ENCODE measurements at regions of chr17 and their contacts with region 1.

Region 1: DNA sequence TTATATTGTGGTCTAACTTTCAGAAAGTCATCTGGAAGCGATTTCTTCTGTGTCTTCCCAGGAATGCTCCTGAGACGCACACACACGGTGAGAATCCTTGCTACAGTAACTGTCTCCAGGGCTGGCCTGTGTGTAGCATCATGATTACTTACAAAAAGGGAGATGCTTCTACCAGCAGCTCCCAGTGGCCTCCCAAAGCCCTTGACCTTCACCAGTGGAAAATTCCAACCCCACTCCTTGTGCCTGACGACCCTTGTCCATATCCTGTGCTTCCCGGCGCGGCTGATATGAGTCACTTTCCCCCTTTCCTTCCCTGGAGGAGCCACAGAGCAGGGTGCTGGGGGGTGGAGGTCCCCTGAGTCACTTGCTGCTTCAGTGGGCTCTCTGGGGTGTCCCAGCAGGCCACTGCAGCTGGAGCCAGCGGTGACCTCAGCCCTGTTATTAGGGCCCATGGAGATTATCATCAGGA is 22.1 kb upstream of the NAT9 start:
- DNase-seq: no peak
- H3K4me3 ChIP-seq: no peak overlapping the region
- H3K27ac ChIP-seq: no peak overlapping the region
- H3K4me1 ChIP-seq: no peaks in the 10 kb centered on the region
- H3K27me3 ChIP-seq: no peaks in the 10 kb centered on the region
- CTCF ChIP-seq: no peak
- POLR2A ChIP-seq: no peak

Region 2: DNA sequence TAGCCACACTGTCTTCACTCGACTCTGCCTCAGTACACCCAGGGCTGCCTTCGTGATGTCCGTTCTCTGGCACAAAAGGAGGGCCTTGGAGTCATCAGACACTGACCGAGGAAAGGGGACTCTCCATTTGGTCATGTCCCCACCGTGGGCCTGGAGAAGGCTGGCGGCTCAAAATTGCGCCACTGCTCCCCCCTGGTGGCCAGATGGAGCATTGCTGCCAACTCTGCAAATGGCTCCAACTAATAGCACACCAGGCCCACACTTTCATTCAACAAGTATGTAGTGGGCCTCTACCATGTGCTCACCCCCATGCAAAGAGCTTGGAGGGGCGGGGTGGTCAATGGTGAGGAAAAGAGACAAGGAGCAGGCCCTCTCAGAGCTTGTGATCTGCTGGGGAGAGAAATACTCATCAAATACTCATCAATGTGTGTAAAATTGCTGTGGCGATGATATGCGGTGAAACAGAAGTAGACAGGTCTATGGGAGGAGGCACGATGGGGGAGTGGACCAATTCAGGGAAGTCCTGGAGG is 66.7 kb after region 1 on chr17:
- intact Hi-C with region 1: loop called (anchors 5 kb)
- DNase-seq: peak; percentile 85
- H3K4me3 ChIP-seq: no peak overlapping the region
- H3K27ac ChIP-seq: no peak overlapping the region
- H3K4me1 ChIP-seq: peaks cover 39% of the 10 kb centered on the region
- H3K27me3 ChIP-seq: no peaks in the 10 kb centered on the region
- CTCF ChIP-seq: peak; percentile 94 to 97 (median 97)
- POLR2A ChIP-seq: no peak

Region 3: DNA sequence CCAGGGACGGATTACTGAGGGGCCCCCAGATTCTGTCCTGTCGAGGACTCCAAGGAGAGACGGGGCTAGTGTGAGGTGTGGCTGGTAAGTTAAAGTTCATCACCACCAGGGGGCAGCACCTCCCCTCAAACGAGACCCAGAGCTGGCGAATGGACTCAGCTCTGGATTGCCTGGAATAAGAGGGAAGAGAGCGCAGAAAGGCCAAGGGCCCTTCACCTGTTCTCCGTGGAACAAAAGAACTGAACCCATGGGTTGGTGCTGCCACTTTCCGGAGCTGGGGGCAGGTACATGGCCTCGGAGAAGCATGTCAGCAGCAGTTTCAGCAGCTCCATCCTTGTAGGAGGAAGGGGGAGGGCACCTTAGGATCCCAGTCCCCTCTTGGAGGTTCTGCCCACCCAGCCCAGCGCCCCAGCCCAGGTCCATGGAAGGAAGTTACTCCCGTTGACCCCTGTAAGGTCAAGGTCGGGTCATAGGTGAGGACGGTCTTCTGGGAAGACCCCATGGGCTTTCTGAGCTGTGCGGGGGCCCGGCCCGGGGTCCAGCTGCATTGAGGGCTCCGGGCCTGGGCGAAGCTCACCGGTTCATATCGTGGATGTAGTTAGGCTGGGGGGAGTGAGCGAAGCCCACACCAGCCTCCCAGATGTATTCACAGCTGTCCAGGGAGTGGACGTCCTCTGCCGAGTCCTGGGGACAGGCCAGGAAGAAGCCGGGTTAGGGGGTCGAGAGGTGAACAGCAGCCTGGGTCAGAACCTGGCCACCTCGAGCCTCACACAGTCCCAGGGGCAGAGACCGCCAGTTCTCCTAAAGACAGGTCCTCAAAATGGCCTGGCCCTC is 163.6 kb after region 1 on chr17:
- intact Hi-C with region 1: no loop called
- DNase-seq: peak; percentile 95
- H3K4me3 ChIP-seq: no peak overlapping the region
- H3K27ac ChIP-seq: no peak overlapping the region
- H3K4me1 ChIP-seq: no peaks in the 10 kb centered on the region
- H3K27me3 ChIP-seq: no peaks in the 10 kb centered on the region
- CTCF ChIP-seq: peak; percentile 91 to 92 (median 91)
- POLR2A ChIP-seq: no peak

Measured in testis (tissue), 5 donors.